ENCODE measurements at regions of chr7 and their contacts with region 1.

Region 1: DNA sequence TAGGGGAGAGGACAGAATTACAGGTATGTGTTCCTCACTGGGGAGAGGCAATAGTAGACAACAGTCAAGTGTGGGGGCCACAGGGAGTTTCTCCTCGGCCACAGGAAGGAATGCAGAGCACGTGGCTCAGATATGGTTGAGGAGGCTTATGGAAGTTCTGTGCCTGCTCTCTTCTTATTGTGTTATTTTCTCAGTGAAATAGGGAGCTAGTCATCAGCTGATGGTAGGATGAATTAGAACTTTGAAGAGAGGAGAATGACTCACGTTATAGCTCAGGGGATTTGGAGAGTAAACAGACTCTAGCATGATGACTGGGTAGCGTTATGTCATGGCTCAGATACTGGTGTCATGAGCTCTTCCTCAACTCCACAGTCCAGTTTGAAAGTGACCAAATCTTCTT is 308.3 kb upstream of the IGFBP3 start:
- DNase-seq: no peak
- CTCF ChIP-seq: no peak

Region 2: DNA sequence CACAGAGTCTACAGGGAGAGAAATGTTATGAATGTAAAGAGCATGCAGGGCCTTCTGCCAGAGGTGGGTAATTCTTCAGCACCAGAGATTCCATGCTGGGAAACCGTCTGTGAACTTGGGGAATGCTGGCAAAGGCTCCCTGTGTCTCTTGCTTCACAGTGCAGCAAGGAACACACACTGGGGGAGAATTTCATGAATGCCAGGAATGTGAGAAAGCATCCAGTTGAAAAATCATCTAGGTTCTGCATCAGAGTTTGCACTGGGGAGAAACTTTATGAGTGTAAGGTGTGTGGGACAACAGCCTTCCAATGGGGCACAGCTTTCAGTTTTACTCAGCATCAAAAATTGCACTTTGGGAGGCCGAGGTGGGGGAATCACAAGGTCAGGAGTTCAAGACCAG is 84.0 kb before region 1 on chr7:
- in situ Hi-C with region 1: loop called (anchors 25 kb)
- DNase-seq: no peak
- CTCF ChIP-seq: no peak